Ascending aorta (tissue), 2 donors: ENCODE measurements at regions of chr3 and their contacts with region 1.

Region 1: GRCh38 chr3:11204697-11205348 is 50.5 kb downstream of the HRH1 start:
- DNase-seq: no peak
- H3K4me3 ChIP-seq: no peak overlapping the region
- H3K27ac ChIP-seq: peak overlapping the region; percentile 8 to 85
- H3K4me1 ChIP-seq: peaks cover 12 to 55% of the 10 kb centered on the region in 2 donors
- H3K27me3 ChIP-seq: no peaks in the 10 kb centered on the region
- CTCF ChIP-seq: no peak

Region 2: DNA sequence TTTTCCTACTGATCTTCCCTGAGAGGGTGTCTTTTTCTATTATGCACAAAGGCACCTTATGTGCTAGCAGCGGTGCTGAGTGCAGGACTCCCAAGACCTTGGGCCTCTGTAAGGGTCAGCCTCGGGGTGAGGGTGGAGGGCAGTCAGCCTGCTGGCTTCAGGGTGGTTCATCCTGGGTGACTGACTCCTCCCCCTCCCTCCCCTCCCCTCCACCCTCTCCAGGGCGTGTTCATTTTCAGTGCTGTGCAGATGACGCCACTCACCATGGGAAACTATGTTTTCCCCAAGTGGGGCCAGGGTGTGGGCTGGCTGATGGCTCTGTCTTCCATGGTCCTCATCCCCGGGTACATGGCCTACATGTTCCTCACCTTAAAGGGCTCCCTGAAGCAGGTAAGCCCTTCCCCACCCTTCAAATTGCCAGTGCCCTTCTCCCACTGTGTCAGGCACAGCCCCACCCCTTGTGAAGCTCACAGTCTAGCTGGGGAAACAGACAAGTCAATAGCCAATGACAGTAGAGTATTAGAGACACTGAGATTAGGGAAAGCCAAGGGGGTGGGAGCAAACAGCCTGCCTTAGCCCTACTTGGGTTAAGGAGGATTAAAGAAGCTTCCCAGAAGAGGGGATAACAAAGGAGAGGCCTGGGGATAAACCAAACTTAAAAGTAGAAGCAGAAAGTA is 170.4 kb before region 1 on chr3:
- intact Hi-C with region 1: no loop called
- DNase-seq: no peak
- H3K4me3 ChIP-seq: no peak overlapping the region
- H3K27ac ChIP-seq: no peak overlapping the region
- H3K4me1 ChIP-seq: no peaks in the 10 kb centered on the region
- H3K27me3 ChIP-seq: no peaks in the 10 kb centered on the region
- CTCF ChIP-seq: no peak

Region 3: DNA sequence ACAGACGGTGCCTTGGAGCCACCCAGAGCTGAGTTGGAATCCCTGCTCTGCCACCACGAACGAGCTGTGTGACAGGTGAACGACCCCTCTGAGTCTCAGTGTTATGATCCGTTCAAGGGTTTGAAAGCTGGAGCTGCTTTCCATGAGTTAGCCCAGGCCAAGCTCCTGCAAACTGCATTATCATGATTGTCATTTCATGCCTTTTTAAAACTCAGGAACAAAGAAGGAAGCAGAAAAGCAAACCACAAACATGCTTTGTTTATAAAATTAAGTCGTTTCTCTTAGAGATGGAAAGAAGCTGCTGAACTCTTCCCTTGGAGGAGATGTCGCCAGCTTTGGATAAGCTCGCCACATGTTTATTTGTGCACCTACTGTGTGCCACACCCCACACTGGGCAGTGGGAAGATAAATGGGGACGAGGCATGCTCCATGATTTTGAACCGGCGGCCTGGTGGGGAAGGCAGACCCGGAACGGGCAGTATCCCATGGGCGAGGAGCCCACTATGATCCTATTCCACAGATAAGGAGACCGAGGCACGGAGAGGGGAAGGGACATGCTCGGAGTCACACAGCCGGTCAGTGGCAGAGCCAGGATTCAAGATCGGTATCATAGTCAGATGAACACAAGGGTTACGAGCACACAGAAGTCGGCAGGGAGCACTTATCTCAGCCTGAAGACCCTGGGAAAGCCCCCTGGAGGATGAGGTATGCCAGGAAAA is 34.6 kb before region 1 on chr3:
- intact Hi-C with region 1: loop called (anchors 5 kb)
- DNase-seq: no peak
- H3K4me3 ChIP-seq: no peak overlapping the region
- H3K27ac ChIP-seq: peak overlapping the region; percentile 85 to 95
- H3K4me1 ChIP-seq: peaks cover 22 to 58% of the 10 kb centered on the region in 2 donors
- H3K27me3 ChIP-seq: no peaks in the 10 kb centered on the region
- CTCF ChIP-seq: no peak

Region 4: GRCh38 chr3:11548721-11549131 is 343.9 kb after region 1 on chr3:
- intact Hi-C with region 1: no loop called
- DNase-seq: peak in 1 of 2 donors; percentile 62
- H3K4me3 ChIP-seq: no peak overlapping the region
- H3K27ac ChIP-seq: peak overlapping the region in 1 of 2 donors; percentile 6
- H3K4me1 ChIP-seq: peaks cover 4 to 20% of the 10 kb centered on the region in 2 donors
- H3K27me3 ChIP-seq: no peaks in the 10 kb centered on the region
- CTCF ChIP-seq: no peak